ENCODE measurements at regions of chr7 and their contacts with region 1.

Region 1: DNA sequence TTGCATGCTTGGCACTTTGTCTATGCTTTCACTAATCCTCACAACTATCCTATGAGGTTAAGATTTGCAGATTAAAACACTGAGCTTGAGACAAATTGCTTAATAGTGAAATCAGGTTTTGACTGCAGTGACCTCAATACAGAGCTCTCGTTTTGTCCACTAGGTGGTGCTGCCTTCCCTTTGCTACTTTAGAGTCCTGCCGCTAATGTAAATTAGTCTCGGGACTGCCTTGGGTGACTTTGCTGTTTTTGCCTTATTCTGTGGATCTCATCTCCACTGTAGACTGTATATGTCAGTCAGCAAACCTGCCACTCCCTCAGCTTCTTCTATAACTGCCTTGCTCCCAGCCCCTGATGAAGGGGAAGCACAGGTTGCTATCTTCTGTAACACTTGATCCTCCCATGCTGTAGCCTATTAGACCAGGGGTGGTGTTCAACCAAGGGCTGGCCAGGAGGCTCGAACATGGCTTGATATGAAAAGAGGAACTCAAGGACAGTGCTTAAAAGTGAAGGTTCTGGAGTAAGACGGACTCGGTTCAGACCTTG is 26.0 kb downstream of the ASB4 start:
- DNase-seq: peak; percentile 81
- ATAC-seq: peak; percentile 90
- H3K4me3 Mint-ChIP-seq: no peak overlapping the region
- H3K27ac Mint-ChIP-seq: no peak overlapping the region
- H3K4me1 Mint-ChIP-seq: no peaks in the 10 kb centered on the region
- H3K27me3 Mint-ChIP-seq: peaks cover 9% of the 10 kb centered on the region
- CTCF ChIP-seq: peak; percentile 80

Region 2: GRCh38 chr7:95491634-95492320 is 20.0 kb before region 1 on chr7:
- CTCF ChIA-PET with region 1: interaction called, 21 read pairs
- POLR2A ChIA-PET with region 1: no interaction called
- intact Hi-C with region 1: no loop called
- DNase-seq: no peak
- ATAC-seq: no peak
- H3K4me3 Mint-ChIP-seq: no peak overlapping the region
- H3K27ac Mint-ChIP-seq: no peak overlapping the region
- H3K4me1 Mint-ChIP-seq: no peaks in the 10 kb centered on the region
- H3K27me3 Mint-ChIP-seq: no peaks in the 10 kb centered on the region
- CTCF ChIP-seq: no peak

Region 3: DNA sequence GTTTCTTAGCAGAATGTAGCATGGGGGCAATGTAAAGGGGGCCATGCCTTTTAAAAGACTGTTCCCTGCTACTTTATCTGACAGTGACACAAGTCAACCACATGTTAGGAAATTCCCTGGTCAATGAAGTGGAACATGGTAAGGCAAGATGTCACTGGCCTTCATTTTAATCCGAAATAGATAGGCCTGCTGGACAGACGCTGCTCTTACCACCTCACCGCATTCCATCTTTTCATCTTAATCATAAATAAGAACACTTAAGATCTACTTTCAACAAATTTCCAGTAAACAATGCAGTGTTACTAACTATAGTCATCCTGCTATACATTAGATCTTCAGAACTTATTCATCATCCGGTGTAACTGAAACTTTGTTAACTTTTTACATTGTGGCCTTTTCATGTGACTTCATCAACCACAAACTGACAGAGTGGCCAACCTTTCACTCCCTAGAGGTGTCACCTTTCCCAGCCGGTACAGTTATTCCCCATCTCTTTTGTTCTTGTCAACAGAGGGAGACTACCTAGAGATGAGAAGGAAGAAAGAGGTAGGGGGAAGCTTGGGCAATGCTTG is 10.4 kb before region 1 on chr7:
- CTCF ChIA-PET with region 1: interaction called, 28 read pairs
- POLR2A ChIA-PET with region 1: no interaction called
- intact Hi-C with region 1: no loop called
- DNase-seq: peak; percentile 38
- ATAC-seq: peak; percentile 89
- H3K4me3 Mint-ChIP-seq: peak overlapping the region; percentile 7
- H3K27ac Mint-ChIP-seq: peak overlapping the region; percentile 82
- H3K4me1 Mint-ChIP-seq: peaks cover 25% of the 10 kb centered on the region
- H3K27me3 Mint-ChIP-seq: peaks cover 5% of the 10 kb centered on the region
- CTCF ChIP-seq: no peak

Region 4: DNA sequence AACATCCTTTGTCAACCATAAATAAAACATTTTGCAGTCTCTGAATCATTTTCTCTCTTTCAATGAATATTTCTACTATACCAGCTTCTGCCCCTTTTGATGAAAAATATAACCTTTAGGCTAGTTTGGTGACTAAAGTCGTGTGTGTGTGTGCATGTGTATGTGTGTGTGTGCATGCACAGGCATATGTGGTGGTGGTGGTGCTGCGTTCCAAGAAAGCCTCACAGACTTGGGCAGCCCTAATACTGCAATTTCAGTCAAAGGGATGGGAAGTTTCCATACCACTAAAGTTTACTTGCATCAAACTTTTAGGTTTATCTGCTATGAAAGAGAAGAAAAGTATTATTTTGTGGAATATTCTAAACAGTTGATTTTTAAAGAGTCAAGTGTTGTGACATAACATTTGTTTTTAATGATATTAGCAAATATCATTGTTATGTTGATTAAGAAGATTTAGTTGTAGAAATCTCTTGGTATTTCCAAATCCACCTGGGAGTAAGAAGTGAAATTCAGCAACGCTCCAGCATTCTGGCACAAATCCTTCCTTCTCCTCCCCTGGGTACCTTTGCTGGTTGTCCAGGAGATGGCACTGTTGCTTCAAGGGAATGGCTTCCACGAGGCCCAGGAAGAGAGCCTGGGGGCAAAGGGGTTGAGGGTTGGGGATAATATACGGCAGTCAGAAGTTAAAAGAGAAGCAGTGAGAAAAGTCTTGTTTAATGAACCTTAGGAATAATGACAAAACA is 15.4 kb after region 1 on chr7:
- CTCF ChIA-PET with region 1: interaction called, 13 read pairs
- POLR2A ChIA-PET with region 1: no interaction called
- intact Hi-C with region 1: no loop called
- DNase-seq: peak; percentile 4
- ATAC-seq: no peak
- H3K4me3 Mint-ChIP-seq: no peak overlapping the region
- H3K27ac Mint-ChIP-seq: no peak overlapping the region
- H3K4me1 Mint-ChIP-seq: no peaks in the 10 kb centered on the region
- H3K27me3 Mint-ChIP-seq: peaks cover 8% of the 10 kb centered on the region
- CTCF ChIP-seq: peak; percentile 61

Region 5: DNA sequence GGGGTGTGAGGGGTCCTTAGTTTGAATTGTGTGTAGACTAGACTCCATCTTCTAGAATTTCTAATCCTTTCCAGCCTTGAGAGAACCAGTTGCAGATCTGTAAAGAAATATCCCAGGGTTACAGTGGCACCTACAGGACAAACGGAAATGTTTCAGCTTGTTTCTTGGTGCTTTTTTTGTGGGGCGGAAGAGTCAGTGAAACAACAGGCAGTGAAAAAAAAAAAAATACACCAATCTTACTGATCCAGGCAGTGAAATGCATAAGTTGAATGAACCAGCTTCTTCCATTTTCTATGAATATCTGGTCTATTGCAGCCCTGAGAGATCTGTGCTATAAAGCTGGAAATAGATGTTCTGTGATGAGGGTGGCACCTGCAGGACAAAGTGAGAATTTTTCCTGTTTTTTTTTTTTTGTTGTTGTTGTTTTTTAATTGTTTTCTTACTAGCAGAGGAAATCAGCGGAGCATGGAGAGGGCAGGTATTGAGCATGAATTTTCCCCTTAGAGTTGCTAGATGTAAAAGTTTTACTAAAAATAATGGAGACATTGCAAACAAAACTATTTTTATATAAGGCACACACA is 178.7 kb after region 1 on chr7:
- CTCF ChIA-PET with region 1: interaction called, 117 read pairs
- POLR2A ChIA-PET with region 1: no interaction called
- intact Hi-C with region 1: loop called (anchors 5 kb)
- DNase-seq: no peak
- ATAC-seq: peak; percentile 55
- H3K4me3 Mint-ChIP-seq: no peak overlapping the region
- H3K27ac Mint-ChIP-seq: no peak overlapping the region
- H3K4me1 Mint-ChIP-seq: no peaks in the 10 kb centered on the region
- H3K27me3 Mint-ChIP-seq: peaks cover 3% of the 10 kb centered on the region
- CTCF ChIP-seq: peak; percentile 70

Region 6: GRCh38 chr7:95871078-95871782 is 359.4 kb after region 1 on chr7:
- CTCF ChIA-PET with region 1: interaction called, 19 read pairs
- POLR2A ChIA-PET with region 1: interaction called, 3 read pairs
- intact Hi-C with region 1: loop called (anchors 5 kb)
- DNase-seq: peak; percentile 13
- ATAC-seq: no peak
- H3K4me3 Mint-ChIP-seq: no peak overlapping the region
- H3K27ac Mint-ChIP-seq: no peak overlapping the region
- H3K4me1 Mint-ChIP-seq: no peaks in the 10 kb centered on the region
- H3K27me3 Mint-ChIP-seq: peaks cover 12% of the 10 kb centered on the region
- CTCF ChIP-seq: peak; percentile 31

Measured in activated CD8-positive, alpha-beta T cell treated with anti-CD3 and anti-CD28 coated beads for 36 hours (primary cell).